GM10248 (cell line): ENCODE measurements at regions of chr18 and their contacts with region 1.

Region 1: GRCh38 chr18:5909130-5909529 is 13.8 kb upstream of the TMEM200C start:
- DNase-seq: no peak
- CTCF ChIP-seq: no peak

Region 2: GRCh38 chr18:5895885-5896740 is 13.0 kb before region 1 on chr18:
- CTCF ChIA-PET with region 1: interaction called, 65 read pairs
- POLR2A ChIA-PET with region 1: no interaction called
- DNase-seq: peak; percentile 38
- CTCF ChIP-seq: no peak

Region 3: DNA sequence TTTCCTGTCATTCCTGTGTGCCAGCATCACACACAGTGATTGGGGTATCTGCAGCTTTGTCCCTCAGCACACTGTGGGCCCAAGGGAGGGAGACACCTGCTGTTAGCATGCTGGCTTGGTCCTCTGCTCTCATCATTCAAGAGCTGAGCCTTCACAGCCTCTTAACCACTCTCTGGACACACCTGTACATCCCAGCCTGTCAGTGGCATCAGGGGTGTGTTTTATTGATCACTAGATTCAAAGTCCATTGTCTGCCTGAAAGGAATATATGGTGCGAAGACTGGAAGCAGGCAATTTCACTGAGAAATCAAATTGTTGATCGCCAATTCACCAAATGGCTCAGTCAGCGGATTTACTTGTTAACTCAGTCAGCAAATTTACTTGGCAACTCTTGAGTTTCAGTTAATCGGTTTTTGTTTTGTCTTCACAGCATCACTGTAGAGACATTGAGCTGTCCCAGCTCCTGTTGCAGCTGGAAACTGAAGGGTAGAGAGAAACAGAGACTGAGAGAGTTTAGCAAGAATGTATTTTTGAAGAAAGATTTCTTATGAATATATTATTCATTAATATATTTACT is 42.5 kb after region 1 on chr18:
- CTCF ChIA-PET with region 1: no interaction called
- POLR2A ChIA-PET with region 1: no interaction called
- DNase-seq: no peak
- CTCF ChIP-seq: no peak